Activated T-helper 1 cell treated with anti-CD3 and anti-CD28 coated beads, Interleukin-12 subunit alpha, Interleukin-12 subunit beta, Interleukin-2, Interleukin-4 antibody, amounts not matched to agents 30 ng/mL and 10 ng/mL and 1 ng/mL, durations not matched to agents 14 hours and 24 hours and 36 hours (primary cell): ENCODE measurements at regions of chr7 and their contacts with region 1.

Region 1: DNA sequence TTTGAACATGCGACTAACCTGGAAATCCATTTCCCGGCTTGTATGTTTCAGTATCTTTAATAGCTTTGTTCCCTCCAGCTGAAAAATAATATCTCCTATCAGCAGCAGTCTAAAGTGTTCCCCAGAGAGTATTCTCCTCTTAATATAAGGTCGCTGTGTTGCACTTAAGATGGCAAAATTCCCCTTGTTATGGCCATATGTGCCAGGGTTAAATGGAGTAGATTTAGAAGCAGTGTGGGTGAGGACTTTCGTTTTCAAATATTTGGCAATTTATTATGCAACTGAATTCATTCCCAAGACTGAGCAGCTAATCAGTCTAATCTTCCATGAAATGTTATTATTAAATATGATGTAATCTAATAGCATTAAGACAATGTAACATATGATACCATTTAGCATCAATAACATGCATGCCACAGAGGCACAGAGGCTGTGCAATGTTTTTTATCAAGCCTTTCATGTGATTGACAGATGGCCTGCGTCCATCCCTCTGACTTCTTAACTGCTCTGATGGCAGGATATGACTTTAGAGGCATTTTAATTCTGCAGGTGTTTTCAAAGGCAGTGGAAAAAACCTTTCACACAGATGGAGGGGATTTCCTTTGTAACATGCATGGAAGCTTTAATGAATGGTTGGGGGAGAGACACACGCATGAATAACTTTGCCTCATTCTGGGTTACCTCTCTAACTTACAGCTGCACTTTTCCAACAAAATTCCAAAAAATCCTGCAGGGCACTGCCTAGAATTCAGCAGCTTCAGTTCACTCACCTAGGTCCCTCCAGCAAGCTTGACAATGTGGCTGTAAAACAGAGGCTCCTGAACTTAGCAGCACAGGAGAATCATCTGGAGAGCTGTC is 55.1 kb upstream of the ZPBP start:
- DNase-seq: peak; percentile 17
- H3K4me3 Mint-ChIP-seq: no peak overlapping the region
- H3K27ac Mint-ChIP-seq: peak overlapping the region; percentile 83
- H3K4me1 Mint-ChIP-seq: peaks cover 70% of the 10 kb centered on the region
- H3K27me3 Mint-ChIP-seq: no peaks in the 10 kb centered on the region

Region 2: GRCh38 chr7:49295146-49295545 is 853.0 kb before region 1 on chr7:
- intact Hi-C with region 1: no loop called
- DNase-seq: no peak
- H3K4me3 Mint-ChIP-seq: no peak overlapping the region
- H3K27ac Mint-ChIP-seq: no peak overlapping the region
- H3K4me1 Mint-ChIP-seq: no peaks in the 10 kb centered on the region
- H3K27me3 Mint-ChIP-seq: no peaks in the 10 kb centered on the region

Region 3: GRCh38 chr7:50197549-50197948 is 49.4 kb after region 1 on chr7:
- intact Hi-C with region 1: loop called (anchors 1 kb)
- DNase-seq: no peak
- H3K4me3 Mint-ChIP-seq: peak overlapping the region; percentile 30
- H3K27ac Mint-ChIP-seq: peak overlapping the region; percentile 80
- H3K4me1 Mint-ChIP-seq: peaks cover 39% of the 10 kb centered on the region
- H3K27me3 Mint-ChIP-seq: peaks cover 24% of the 10 kb centered on the region